Activated CD8-positive, alpha-beta T cell treated with anti-CD3 and anti-CD28 coated beads for 36 hours (primary cell): ENCODE measurements at regions of chr17 and their contacts with region 1.

Region 1: DNA sequence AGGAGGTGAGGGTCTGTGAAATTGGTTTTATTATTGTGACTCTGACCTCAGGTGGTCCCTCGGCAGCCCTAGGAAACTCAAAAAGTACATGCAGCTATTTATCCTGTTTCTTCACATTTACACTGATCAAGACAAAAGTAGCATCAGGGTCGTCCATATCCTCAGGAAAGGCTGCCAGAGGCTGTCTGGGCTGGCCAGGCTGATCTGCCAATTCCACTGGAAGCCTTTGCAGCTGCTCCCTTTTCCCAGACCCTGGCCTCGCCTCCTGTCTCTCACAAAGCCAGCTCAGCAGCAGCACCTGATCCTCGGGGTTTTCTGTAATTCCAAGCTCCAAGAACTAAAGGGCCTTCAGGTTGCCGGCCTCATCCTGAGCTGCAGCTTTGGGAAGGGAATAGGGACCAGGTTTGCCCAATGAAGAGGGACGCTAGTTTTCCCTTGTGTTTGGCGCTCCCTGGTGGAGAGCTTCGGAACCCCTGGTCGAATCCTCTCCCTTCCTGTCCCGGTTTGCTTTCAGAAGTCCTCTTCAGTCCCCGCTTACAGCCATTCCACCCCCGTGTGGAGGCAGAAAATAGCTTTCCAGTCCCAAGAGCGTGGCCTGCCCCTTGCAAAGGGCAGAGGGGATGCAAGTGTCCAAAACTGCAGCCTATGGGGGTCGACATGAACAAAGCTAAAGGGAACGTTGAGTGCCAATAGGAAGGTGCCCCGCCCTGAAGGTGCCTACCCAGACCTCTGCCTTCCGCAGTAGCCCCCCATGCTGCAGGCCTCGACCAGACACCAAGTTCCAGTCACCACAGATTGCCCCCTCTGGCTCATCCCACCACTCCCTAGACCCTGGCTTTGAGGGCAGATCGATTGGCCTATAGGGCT is 13.4 kb downstream of the MFSD6L start:
- DNase-seq: peak; percentile 77
- ATAC-seq: no peak
- H3K4me3 Mint-ChIP-seq: no peak overlapping the region
- H3K27ac Mint-ChIP-seq: no peak overlapping the region
- H3K4me1 Mint-ChIP-seq: peaks cover 5% of the 10 kb centered on the region
- H3K27me3 Mint-ChIP-seq: no peaks in the 10 kb centered on the region
- CTCF ChIP-seq: peak; percentile 93

Region 2: DNA sequence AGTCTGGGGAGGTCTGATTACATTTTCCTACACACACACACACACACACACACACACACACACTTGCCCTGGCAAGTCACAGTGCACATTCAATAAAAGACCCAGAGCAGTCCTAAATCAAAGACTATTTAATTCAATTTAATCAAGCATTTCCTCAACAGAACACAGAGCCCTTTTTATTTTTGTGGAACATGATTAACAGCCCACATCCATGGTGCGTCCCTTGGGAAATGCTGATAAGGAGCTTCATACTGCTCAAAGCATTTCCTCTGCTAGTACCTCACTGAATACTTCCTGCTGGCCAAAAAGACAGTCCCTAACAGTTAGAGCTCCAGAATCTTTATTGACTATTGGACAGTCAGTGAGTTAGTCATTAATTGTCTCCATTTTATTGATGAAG is 112.2 kb before region 1 on chr17:
- CTCF ChIA-PET with region 1: no interaction called
- POLR2A ChIA-PET with region 1: no interaction called
- intact Hi-C with region 1: no loop called
- DNase-seq: no peak
- ATAC-seq: no peak
- H3K4me3 Mint-ChIP-seq: no peak overlapping the region
- H3K27ac Mint-ChIP-seq: no peak overlapping the region
- H3K4me1 Mint-ChIP-seq: no peaks in the 10 kb centered on the region
- H3K27me3 Mint-ChIP-seq: peaks cover 1% of the 10 kb centered on the region
- CTCF ChIP-seq: no peak

Region 3: DNA sequence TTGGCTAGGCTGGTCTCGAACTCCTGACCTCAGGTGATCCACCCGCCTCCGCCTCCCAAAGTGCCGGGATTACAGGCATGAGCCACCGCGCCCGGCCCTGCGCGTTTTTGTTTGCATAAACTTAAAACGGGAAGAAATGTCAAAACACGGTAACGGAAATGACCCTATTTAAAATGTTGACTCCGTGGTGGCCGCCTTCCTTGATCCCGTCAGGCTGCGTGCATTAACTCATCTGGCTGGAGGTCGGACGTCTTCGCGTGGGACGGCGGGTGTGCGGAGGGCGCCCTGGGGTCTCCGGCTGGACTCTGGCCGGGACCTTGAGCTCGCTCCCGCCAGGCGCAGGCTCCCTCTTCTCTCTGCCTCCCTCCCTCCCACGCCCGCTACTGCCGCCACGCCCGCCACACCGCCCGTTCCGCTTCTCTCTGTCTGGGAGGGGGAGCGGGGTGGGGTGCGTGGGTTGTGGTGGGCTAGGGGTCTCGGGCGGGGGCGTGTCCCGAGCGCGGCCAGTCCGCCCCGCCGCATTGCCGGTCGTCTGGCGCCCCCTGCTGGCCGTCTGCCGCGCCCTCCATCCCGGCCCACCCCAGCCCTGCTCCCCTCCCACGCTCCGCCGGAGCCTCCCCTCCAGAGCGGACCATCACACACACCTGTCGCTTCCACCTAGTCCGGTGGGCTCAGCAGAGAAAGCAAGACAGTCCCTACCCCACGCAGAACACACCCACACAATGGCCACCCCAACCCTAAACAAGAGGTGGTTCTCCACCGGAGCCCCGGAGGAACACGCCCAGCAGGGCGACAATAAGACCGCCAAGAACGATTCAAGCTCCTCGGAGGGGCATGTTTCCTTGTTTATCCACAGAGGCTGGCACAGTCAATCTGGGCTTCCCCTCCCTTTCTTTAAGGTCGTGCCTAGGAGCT is 39.9 kb before region 1 on chr17:
- CTCF ChIA-PET with region 1: interaction called, 27 read pairs
- POLR2A ChIA-PET with region 1: no interaction called
- intact Hi-C with region 1: no loop called
- DNase-seq: peak; percentile 83
- ATAC-seq: peak; percentile 74
- H3K4me3 Mint-ChIP-seq: peak overlapping the region; percentile 82
- H3K27ac Mint-ChIP-seq: peak overlapping the region; percentile 88
- H3K4me1 Mint-ChIP-seq: peaks cover 12% of the 10 kb centered on the region
- H3K27me3 Mint-ChIP-seq: no peaks in the 10 kb centered on the region
- CTCF ChIP-seq: peak; percentile 99

Region 4: GRCh38 chr17:8762012-8762411 is 23.8 kb before region 1 on chr17:
- CTCF ChIA-PET with region 1: interaction called, 11 read pairs
- POLR2A ChIA-PET with region 1: no interaction called
- intact Hi-C with region 1: no loop called
- DNase-seq: no peak
- ATAC-seq: no peak
- H3K4me3 Mint-ChIP-seq: no peak overlapping the region
- H3K27ac Mint-ChIP-seq: no peak overlapping the region
- H3K4me1 Mint-ChIP-seq: no peaks in the 10 kb centered on the region
- H3K27me3 Mint-ChIP-seq: no peaks in the 10 kb centered on the region
- CTCF ChIP-seq: no peak

Region 5: DNA sequence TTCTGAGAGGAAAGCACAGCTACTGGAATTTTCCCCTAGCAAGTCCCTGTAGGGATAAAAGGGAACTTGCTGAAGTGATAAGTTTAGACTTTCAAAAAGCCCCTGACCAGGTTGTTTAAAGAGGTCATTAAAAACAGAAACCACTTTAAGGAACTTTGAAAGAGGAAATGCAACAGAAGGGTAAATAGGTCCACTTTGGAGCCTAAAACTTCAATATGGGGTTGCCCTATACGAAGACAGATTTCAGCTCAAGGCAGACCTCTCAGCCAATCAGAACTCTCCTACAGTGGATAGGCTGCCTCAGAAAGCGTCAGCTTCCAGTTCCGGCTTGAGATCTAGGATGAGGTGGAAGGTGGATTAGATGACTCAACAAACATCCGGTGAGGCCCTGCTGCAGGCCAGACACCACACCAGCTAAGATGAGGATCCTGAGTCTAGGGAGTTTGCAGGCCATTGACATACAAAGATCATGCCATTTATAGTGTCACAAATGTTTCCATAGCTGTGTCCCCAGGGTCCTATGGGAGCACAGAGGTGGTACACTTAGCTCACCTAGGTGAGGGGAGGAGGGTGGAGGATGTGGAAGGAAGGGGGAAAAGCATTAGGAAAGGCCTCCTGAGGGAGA is 21.3 kb after region 1 on chr17:
- CTCF ChIA-PET with region 1: interaction called, 13 read pairs
- POLR2A ChIA-PET with region 1: no interaction called
- intact Hi-C with region 1: no loop called
- DNase-seq: no peak
- ATAC-seq: peak; percentile 61
- H3K4me3 Mint-ChIP-seq: no peak overlapping the region
- H3K27ac Mint-ChIP-seq: no peak overlapping the region
- H3K4me1 Mint-ChIP-seq: peaks cover 9% of the 10 kb centered on the region
- H3K27me3 Mint-ChIP-seq: no peaks in the 10 kb centered on the region
- CTCF ChIP-seq: no peak

Region 6: DNA sequence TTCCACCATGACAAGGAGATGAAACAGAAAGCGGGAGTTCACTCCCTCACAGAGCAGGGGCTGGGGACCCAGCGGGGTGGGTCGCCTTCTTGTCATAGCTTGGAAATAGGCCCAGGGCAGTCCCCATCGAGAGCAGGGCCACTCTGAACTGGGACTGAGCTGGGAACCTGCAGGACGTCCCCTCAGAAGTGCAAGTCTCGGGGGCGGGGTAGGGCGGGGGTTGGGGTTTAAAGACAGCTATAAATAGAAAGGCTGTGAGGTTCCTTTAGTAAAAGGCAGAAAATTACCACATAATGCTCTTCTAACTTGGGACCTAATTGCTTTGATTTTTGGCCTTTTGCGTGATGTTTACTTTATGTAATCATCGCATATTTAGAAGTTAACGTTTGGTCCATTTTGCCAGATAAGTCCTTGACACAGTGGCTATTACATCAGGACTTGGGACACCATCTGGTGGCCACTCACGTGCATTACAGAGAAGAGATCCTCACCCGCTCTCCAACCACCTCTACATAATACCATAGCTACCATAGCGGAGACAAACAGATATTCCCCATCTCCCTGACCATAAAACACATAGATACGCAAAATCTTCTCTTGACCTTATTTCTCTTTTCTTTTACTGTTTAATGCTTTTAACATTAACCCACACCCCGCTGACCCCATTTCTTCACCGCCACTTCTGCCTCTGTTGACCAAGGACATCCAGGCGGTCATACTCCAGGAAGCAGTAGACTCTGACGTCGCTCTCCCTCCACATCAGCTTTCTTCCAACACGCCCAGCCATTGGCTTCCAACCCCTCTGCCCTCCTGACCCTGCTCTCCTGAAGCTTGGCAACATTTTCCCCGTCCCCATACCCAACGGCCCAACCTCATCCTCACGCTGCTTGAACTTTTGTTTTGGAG is 109.1 kb after region 1 on chr17:
- CTCF ChIA-PET with region 1: interaction called, 14 read pairs
- POLR2A ChIA-PET with region 1: no interaction called
- intact Hi-C with region 1: no loop called
- DNase-seq: peak; percentile 77
- ATAC-seq: peak; percentile 60
- H3K4me3 Mint-ChIP-seq: no peak overlapping the region
- H3K27ac Mint-ChIP-seq: peak overlapping the region; percentile 60
- H3K4me1 Mint-ChIP-seq: peaks cover 69% of the 10 kb centered on the region
- H3K27me3 Mint-ChIP-seq: no peaks in the 10 kb centered on the region
- CTCF ChIP-seq: peak; percentile 84

Region 7: DNA sequence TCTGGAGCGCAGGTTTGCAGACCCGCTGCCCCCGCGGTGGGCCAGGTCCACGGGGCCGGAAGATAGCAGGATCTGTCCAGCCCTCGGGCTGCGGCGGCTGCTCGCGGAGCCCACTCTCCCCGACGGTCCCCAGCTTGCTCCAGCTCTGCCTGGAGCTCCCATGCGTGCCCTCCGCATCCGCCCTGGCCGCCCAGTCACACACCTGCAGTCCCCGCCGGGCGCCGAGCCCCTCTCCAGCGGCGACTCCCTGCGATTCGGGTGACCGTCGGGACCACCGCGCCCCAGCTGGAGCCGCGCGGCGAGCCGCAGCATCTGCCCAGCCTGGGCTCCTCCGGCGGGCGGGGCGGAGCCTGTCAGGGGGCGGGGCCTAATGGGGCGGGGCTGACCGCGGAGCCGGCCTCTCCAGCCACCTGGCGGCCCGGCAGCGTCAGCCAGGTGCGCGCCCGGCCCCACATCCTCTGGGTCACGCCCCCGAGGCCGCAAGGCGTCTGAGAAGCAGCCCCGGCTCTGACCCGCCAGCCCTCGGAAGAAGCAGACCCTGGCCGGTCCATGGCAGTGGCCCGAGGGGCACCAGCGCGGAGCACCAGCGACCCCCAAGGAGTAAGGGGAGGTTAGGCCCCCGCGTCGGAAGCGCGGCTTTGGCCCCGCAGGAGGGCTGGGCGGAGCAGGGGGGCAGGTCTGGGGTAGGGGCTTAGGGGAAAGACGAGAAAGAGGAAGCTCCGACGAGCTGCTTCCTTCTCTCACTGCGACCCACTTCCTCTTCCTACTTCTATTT is 179.8 kb after region 1 on chr17 and contains the start of gene PIK3R5:
- CTCF ChIA-PET with region 1: no interaction called
- POLR2A ChIA-PET with region 1: no interaction called
- intact Hi-C with region 1: no loop called
- DNase-seq: peak; percentile 81
- ATAC-seq: peak; percentile 77
- H3K4me3 Mint-ChIP-seq: peak within 1 kb of the TSS; percentile 97
- H3K27ac Mint-ChIP-seq: peak within 1 kb of the TSS; percentile 100
- H3K4me1 Mint-ChIP-seq: peaks cover 51% of the 10 kb centered on the region
- H3K27me3 Mint-ChIP-seq: no peaks in the 10 kb centered on the region
- CTCF ChIP-seq: peak; percentile 53
- total RNA-seq, gene PIK3R5: 46.7 to 50.4 TPM